Heart left ventricle (tissue), 16 donors: ENCODE measurements at regions of chr2 and their contacts with region 1.

Region 1: DNA sequence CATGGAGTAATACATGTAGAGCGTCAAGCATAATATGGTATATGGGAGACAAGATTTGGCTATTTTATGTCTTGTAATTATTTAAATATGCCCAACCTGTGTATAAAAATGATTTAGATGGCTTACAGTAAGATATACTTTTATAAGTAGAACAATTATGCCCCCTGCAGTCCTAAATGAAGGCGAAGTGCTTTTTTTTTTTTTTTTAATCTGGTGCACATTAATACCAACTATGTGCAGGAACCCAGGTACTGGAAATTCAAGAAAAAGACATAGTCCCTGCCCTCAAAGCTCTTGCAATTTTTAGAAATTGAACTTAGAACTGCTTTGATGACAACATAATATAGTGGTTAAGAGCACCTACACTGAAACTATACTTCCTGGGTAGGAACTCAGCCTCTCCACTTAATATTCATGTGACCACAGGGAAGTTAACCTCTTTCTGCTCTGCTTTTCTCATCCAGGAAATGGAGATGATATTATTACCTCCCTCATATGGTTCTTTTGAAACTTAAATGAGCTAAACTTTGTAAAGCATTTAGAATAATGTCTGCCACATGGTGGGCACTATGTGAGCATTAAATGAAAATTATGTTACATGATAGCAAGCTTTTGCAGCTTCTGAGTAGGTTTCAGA is 38.1 kb downstream of the AFTPH start:
- DNase-seq: no peak
- ATAC-seq: peak in 2 of 4 donors; percentile 44 to 51
- H3K4me3 ChIP-seq: no peak overlapping the region
- H3K27ac ChIP-seq: no peak overlapping the region
- H3K4me1 ChIP-seq: peaks cover 0 to 24% (median 2%) of the 10 kb centered on the region in 12 donors
- H3K27me3 ChIP-seq: no peaks in the 10 kb centered on the region
- CTCF ChIP-seq: peak in 11 of 12 donors; percentile 18 to 62 (median 40)
- POLR2A ChIP-seq: no peak

Region 2: DNA sequence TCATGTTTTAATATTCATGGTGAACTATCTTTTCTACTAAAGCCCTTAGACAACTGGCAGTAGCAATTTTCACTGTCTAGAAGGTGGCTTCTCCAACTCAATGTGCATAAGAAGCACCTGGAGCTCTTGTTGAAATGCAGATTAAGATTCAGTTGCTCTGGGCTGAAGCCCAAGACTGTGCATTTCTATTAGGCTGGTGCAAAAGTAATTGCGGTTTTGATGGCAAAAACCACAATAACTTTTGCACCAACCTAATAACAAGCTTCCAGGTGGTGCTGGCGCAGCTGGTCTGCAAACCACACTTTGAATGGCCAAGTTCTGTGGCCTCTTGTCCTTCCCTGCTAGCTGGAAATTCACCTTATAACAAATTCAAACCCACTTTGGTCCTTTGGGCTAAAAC is 516.3 kb before region 1 on chr2:
- intact Hi-C with region 1: loop called in 6 of 10 experiments (anchors 5 to 10 kb)
- DNase-seq: no peak
- ATAC-seq: no peak
- H3K4me3 ChIP-seq: no peak overlapping the region
- H3K27ac ChIP-seq: no peak overlapping the region
- H3K4me1 ChIP-seq: peaks cover 0 to 7% (median 0%) of the 10 kb centered on the region in 12 donors
- H3K27me3 ChIP-seq: no peaks in the 10 kb centered on the region
- CTCF ChIP-seq: no peak
- POLR2A ChIP-seq: no peak

Region 3: GRCh38 chr2:64523666-64524603 is 38.3 kb before region 1 on chr2 and contains the start of gene AFTPH:
- intact Hi-C with region 1: loop called (anchors 1 to 5 kb)
- DNase-seq: peak; percentile 99 to 100 (median 99)
- ATAC-seq: peak; percentile 99 to 100 (median 99)
- H3K4me3 ChIP-seq: peak within 1 kb of the TSS; percentile 70 to 97 (median 94)
- H3K27ac ChIP-seq: peak within 1 kb of the TSS; percentile 85 to 98 (median 94)
- H3K4me1 ChIP-seq: peaks cover 0 to 42% (median 28%) of the 10 kb centered on the region in 12 donors
- H3K27me3 ChIP-seq: no peaks in the 10 kb centered on the region
- CTCF ChIP-seq: no peak
- POLR2A ChIP-seq: peak in 1 of 2 donors; percentile 77
- total RNA-seq, gene AFTPH: 9.2 to 15.2 (median 11.4) TPM